ENCODE measurements at regions of chr3 and their contacts with region 1.

Region 1: DNA sequence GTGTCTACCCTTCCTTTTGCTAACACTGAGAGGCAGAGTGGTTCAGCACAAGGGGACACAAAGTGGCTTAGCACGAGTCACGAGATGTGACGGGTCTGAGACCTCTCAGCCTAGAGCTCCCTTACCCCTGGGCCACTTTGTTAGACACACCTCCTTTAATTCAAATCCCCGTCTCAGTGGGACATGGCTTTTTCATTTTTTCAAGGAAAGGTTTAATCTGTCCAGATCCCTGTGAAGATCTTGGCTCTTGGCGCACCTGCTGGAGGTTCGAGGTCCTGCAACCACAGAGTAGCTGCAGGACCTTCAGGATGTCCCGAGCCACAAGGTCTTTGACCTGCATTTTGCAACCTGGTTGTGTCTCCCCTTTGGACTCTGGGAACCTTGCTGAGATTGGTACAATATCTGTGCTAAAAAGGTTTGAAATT is 52.0 kb downstream of the LPP start:
- DNase-seq: no peak
- H3K4me3 ChIP-seq: no peak overlapping the region
- H3K27ac ChIP-seq: peak overlapping the region; percentile 30 to 62
- H3K4me1 ChIP-seq: peaks cover 11% of the 10 kb centered on the region
- H3K27me3 ChIP-seq: no peaks in the 10 kb centered on the region
- CTCF ChIP-seq: no peak
- POLR2A ChIP-seq: no peak

Region 2: GRCh38 chr3:188154014-188154808 is 51.8 kb before region 1 on chr3 and contains the start of gene LPP:
- intact Hi-C with region 1: loop called (anchors 5 kb)
- DNase-seq: peak; percentile 73
- H3K4me3 ChIP-seq: peak within 1 kb of the TSS; percentile 59 to 81
- H3K27ac ChIP-seq: peak within 1 kb of the TSS; percentile 91 to 93
- H3K4me1 ChIP-seq: peaks cover 11% of the 10 kb centered on the region
- H3K27me3 ChIP-seq: no peaks in the 10 kb centered on the region
- CTCF ChIP-seq: peak in 1 of 4 experiments; percentile 10
- POLR2A ChIP-seq: peak; percentile 14
- total RNA-seq, gene LPP: 219 to 248 TPM

Region 3: DNA sequence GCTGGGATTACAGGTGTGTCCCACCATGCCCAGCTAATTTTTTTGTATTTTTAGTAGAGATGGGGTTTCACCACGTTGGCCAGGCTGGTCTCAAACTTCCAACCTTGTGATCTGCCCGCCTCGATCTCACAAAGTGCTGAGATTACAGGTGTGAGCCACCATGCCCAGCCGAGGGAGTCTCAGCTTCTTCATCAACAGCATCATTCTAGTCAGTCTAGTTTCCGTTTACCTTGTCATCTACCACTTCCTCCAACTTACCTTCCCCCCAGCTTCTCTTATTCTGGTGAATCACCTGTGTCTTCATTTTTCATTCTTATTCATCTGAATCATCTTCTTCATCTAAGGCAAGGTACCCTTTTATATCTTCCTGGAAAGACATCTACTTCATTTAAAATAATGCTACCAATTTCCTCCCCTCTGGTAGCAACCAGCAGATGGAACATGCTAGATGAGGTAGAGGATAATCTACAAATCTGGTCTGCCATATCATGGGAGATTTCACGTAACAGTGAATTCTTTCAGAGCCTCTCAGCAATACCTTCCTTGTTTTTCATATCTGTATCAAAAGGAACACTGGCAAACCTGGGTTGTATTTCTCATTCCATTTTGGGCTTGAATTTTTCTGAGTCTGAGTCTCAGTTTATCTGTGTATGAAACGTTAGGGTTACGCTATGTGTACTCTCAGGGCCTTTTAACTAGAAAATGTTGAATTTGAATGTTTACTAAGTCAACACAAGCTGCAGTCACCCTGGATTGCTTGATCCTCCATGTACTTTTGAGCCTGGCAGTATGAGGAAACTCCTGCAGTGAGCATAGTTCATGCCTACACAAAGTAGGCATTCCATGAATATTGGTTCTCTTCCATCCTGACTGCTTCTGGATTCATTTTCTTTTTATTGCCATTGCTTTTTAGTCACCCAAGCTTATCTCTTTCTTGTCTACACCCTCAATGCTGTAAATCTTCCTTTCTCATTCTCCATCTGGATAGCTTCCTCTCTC is 35.2 kb before region 1 on chr3:
- intact Hi-C with region 1: no loop called
- DNase-seq: no peak
- H3K4me3 ChIP-seq: no peak overlapping the region
- H3K27ac ChIP-seq: peak overlapping the region; percentile 15 to 26
- H3K4me1 ChIP-seq: peaks cover 5% of the 10 kb centered on the region
- H3K27me3 ChIP-seq: no peaks in the 10 kb centered on the region
- CTCF ChIP-seq: no peak
- POLR2A ChIP-seq: no peak